ENCODE measurements at regions of chr5 and their contacts with region 1.

Region 1: GRCh38 chr5:53874409-53874808 is 314.0 kb downstream of the NDUFS4 start:
- DNase-seq: no peak

Region 2: GRCh38 chr5:53739111-53739510 is 135.3 kb before region 1 on chr5:
- in situ Hi-C with region 1: no loop called
- DNase-seq: no peak

Region 3: DNA sequence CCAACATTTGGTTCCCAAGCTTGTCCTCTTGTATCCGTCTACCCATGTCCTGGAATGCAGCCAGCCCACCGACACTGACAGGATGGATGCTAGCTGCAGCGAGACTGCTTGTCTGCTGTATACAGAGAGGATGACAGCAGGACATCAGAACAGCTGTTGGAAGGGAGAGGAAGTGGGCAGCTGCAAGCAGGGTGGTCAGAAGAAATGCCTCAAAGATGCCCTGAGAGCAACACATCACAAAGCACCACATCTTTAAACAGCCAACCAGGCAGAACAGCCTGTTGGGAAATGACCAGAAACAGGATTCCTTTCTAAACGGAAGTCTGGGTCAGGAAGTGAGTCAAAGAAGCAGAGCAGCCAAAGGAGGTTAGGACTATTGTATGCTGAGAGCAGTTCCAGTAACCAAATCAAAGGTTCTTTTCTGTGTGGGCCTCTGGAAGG is 94.8 kb before region 1 on chr5:
- in situ Hi-C with region 1: loop called (anchors 10 kb)
- DNase-seq: no peak